AG04450 (cell line): ENCODE measurements at regions of chr1 and their contacts with region 1.

Region 1: GRCh38 chr1:54355931-54356679 is 50.1 kb downstream of the SSBP3 start:
- DNase-seq: no peak
- H3K4me3 ChIP-seq: no peak overlapping the region
- H3K27ac ChIP-seq: no peak overlapping the region
- H3K27me3 ChIP-seq: no peaks in the 10 kb centered on the region
- CTCF ChIP-seq: no peak

Region 2: GRCh38 chr1:54121482-54122134 is 234.5 kb before region 1 on chr1:
- CTCF ChIA-PET with region 1: no interaction called
- POLR2A ChIA-PET with region 1: interaction called, 13 read pairs
- DNase-seq: peak; percentile 37
- H3K4me3 ChIP-seq: peak overlapping the region; percentile 34; the same call in 1 of the 2 replicates
- H3K27ac ChIP-seq: no peak overlapping the region
- H3K27me3 ChIP-seq: peaks cover 6% of the 10 kb centered on the region
- CTCF ChIP-seq: peak; percentile 78

Region 3: DNA sequence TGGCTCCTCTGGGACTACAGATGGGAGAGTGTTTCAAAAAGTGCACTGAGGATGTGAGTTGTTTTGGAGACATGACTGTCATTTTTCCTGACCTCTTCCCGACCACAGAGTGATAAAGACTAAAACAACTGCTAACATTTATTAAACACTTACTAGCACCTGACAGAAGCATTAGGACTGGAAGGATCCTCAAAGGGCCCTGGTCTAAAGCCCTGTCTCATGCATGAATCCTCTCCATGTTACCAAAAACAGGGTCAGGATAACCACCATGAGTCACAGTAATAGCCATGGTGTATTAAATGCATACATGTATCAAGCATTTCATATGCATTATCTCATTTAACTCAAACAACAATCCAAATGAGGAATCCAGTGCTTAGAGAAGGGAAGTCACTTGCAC is 167.8 kb before region 1 on chr1:
- CTCF ChIA-PET with region 1: no interaction called
- POLR2A ChIA-PET with region 1: no interaction called
- DNase-seq: no peak
- H3K4me3 ChIP-seq: no peak overlapping the region
- H3K27ac ChIP-seq: no peak overlapping the region
- H3K27me3 ChIP-seq: no peaks in the 10 kb centered on the region
- CTCF ChIP-seq: no peak

Region 4: GRCh38 chr1:54253480-54253879 is 102.6 kb before region 1 on chr1:
- CTCF ChIA-PET with region 1: no interaction called
- POLR2A ChIA-PET with region 1: interaction called, 12 read pairs
- DNase-seq: peak; percentile 61
- H3K4me3 ChIP-seq: no peak overlapping the region
- H3K27ac ChIP-seq: peak overlapping the region; percentile 75
- H3K27me3 ChIP-seq: no peaks in the 10 kb centered on the region
- CTCF ChIP-seq: no peak